ENCODE measurements at regions of chr16 and their contacts with region 1.

Region 1: DNA sequence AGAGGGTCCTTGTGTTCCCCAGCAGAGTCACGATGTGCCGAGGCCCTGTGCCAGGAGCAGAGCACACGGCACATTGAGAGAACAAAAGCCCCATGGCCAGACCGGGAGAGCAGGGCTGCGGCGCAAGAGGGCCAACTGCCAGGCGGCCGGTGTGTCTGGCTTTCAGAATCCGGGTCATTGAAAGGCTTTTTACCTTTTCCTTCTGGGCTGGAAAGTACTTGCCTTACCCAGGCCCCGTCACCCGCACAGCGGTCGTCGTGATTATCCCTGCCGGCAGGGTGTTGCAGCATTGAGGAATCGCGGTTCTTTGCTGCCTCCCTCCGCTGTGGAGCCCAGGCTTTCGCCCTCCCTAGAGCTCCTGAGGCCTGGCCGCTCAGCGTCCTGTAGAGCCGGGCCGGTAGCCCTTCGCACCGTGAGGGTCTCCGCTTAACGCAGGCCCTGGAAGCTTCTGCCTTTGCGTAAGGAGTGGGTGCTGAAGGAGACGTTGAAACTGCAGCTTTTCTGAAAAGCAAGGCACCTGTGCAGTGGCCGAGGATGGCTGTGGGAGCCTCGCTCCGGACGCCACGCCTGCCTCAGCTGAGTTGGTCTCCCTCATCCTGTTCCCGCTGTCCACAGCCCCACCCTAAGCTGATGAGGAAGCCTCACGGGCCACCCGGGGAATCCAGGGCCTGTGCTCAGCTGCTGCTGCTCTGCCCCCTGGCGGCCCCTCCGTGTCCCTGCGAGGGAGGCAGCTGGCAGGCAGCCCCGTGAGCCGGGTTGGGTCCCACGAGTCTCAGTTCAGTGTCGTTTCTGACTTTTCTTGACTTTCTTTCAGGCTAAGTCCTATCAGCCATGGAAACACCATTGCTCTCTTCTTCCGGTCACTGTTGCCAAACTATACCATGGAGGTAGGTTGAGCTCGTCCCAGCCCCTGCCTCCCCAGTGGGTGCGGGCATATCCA is 8.6 kb upstream of the MC1R start:
- DNase-seq: peak; percentile 84
- ATAC-seq: peak; percentile 91
- H3K4me3 Mint-ChIP-seq: no peak overlapping the region
- H3K27ac Mint-ChIP-seq: peak overlapping the region; percentile 70; the same call in 1 of the 2 replicates
- H3K4me1 Mint-ChIP-seq: no peaks in the 10 kb centered on the region
- H3K27me3 Mint-ChIP-seq: no peaks in the 10 kb centered on the region
- CTCF ChIP-seq: peak; percentile 83

Region 2: GRCh38 chr16:89706507-89707263 is 203.4 kb before region 1 on chr16:
- CTCF ChIA-PET with region 1: interaction called, 17 read pairs
- POLR2A ChIA-PET with region 1: no interaction called
- DNase-seq: no peak
- ATAC-seq: no peak
- H3K4me3 Mint-ChIP-seq: peak overlapping the region; percentile 52; the same call in 1 of the 2 replicates
- H3K27ac Mint-ChIP-seq: no peak overlapping the region
- H3K4me1 Mint-ChIP-seq: peaks cover 17% of the 10 kb centered on the region
- H3K27me3 Mint-ChIP-seq: peaks cover 40% of the 10 kb centered on the region
- CTCF ChIP-seq: no peak

Region 3: GRCh38 chr16:89890886-89891657 is 19.0 kb before region 1 on chr16:
- CTCF ChIA-PET with region 1: interaction called, 11 read pairs
- POLR2A ChIA-PET with region 1: no interaction called
- DNase-seq: no peak
- ATAC-seq: no peak
- H3K4me3 Mint-ChIP-seq: no peak overlapping the region
- H3K27ac Mint-ChIP-seq: peak overlapping the region; percentile 70
- H3K4me1 Mint-ChIP-seq: no peaks in the 10 kb centered on the region
- H3K27me3 Mint-ChIP-seq: no peaks in the 10 kb centered on the region
- CTCF ChIP-seq: no peak

Region 4: GRCh38 chr16:89922884-89923690 is 13.0 kb after region 1 on chr16 and contains the start of gene TUBB3:
- CTCF ChIA-PET with region 1: interaction called, 70 read pairs
- POLR2A ChIA-PET with region 1: interaction called, 14 read pairs
- DNase-seq: peak; percentile 85
- ATAC-seq: peak; percentile 17
- H3K4me3 Mint-ChIP-seq: peak within 1 kb of the TSS; percentile 88
- H3K27ac Mint-ChIP-seq: no peak within 1 kb of the TSS
- H3K4me1 Mint-ChIP-seq: peaks cover 19% of the 10 kb centered on the region
- H3K27me3 Mint-ChIP-seq: peaks cover 36% of the 10 kb centered on the region
- CTCF ChIP-seq: no peak
- total RNA-seq, gene TUBB3: 150 to 209 TPM (median 163 TPM) in 3 replicates

Region 5: DNA sequence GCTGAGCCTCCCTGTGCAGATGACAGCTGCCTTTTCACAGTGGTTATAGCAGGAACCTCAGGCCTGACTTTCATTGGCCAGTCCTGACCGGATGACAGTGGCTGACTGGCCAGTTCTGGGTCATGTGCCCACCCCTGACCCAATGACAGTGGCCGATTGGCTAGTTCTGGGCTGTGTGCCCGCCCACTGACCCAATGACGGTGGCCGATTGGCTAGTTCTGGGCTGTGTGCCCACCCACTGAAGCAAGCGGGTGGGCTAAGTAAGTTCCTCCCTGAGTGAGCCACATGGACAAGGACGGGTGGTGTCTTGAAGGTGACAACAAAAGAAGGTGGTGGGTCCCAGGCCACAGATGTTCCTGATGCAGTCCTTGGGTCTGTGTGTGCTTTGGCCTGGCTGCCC is 48.0 kb after region 1 on chr16:
- CTCF ChIA-PET with region 1: no interaction called
- POLR2A ChIA-PET with region 1: no interaction called
- DNase-seq: peak; percentile 66
- ATAC-seq: peak; percentile 97
- H3K4me3 Mint-ChIP-seq: no peak overlapping the region
- H3K27ac Mint-ChIP-seq: peak overlapping the region; percentile 64; the same call in 1 of the 2 replicates
- H3K4me1 Mint-ChIP-seq: peaks cover 2% of the 10 kb centered on the region
- H3K27me3 Mint-ChIP-seq: no peaks in the 10 kb centered on the region; the same call in 1 of the 2 replicates
- CTCF ChIP-seq: no peak